ENCODE measurements at regions of chr22 and their contacts with region 1.

Region 1: GRCh38 chr22:22422629-22423112 is 85.9 kb downstream of the ZNF280B start:
- DNase-seq: peak; percentile 85
- ATAC-seq: peak; percentile 100
- H3K4me3 ChIP-seq: no peak overlapping the region
- H3K27ac ChIP-seq: no peak overlapping the region
- H3K4me1 ChIP-seq: no peaks in the 10 kb centered on the region
- H3K27me3 ChIP-seq: no peaks in the 10 kb centered on the region
- CTCF ChIP-seq: peak; percentile 55 to 72 (median 62)
- EP300 ChIP-seq: 0 out of 4 replicates have a peak, but pooled peaks have one; percentile 27 to 30
- POLR2A ChIP-seq: no peak
- RAD21 ChIP-seq: peak; percentile 48

Region 2: DNA sequence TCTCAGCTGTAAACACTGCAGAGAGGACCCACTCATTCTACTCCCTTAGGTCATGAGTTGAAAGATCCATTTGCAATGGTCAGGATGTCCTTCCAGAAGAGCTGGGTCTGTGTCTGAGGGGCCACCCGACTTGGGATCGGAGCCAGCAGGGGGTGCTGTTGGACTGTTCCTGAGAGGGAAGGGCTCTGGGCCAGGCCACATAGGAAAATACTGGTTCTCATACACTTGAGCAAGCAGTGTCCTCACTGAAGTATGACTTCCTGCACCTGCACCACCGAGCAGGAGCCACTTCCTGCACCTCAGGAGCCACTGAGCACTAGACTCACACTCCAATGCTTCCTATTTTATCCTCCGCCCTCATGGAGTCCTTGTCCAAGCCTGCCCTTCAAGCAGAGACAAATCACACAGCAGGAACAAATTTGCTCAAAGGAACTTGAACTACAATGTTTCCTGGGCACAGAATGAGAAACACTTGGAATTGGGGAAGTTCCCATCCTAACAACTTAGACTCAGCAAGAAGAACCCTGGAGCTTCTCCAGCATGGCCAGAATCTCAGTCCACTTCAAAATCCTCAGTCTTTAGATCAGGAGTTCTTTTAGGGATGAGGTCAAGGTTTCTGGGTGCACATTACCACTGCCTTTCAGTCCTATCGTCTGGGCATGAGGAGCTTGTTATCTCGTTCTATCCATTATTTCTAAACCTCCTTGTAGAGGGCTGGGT is 214.7 kb before region 1 on chr22:
- CTCF ChIA-PET with region 1: no interaction called
- POLR2A ChIA-PET with region 1: no interaction called
- RAD21 ChIA-PET with region 1: no interaction called
- SMC1A ChIA-PET with region 1: no interaction called
- in situ Hi-C with region 1: no loop called
- intact Hi-C with region 1: loop called (anchors 10 kb)
- DNase-seq: peak; percentile 62
- ATAC-seq: peak; percentile 94
- H3K4me3 ChIP-seq: no peak overlapping the region
- H3K27ac ChIP-seq: peak overlapping the region; percentile 45
- H3K4me1 ChIP-seq: peaks cover 3% of the 10 kb centered on the region
- H3K27me3 ChIP-seq: no peaks in the 10 kb centered on the region
- CTCF ChIP-seq: peak; percentile 66 to 78 (median 69); a peak in 5 of 6 replicates
- EP300 ChIP-seq: no peak
- POLR2A ChIP-seq: 0 out of 2 replicates have a peak, but pooled peaks have one; percentile 35
- RAD21 ChIP-seq: peak; percentile 81

Region 3: GRCh38 chr22:22403771-22404170 is 18.9 kb before region 1 on chr22:
- CTCF ChIA-PET with region 1: interaction called, 33 read pairs
- POLR2A ChIA-PET with region 1: no interaction called
- RAD21 ChIA-PET with region 1: interaction called, 18 read pairs
- SMC1A ChIA-PET with region 1: interaction called, 4 read pairs
- in situ Hi-C with region 1: no loop called
- intact Hi-C with region 1: no loop called
- DNase-seq: no peak
- ATAC-seq: peak; percentile 43; the same call in 1 of the 3 replicates
- H3K4me3 ChIP-seq: no peak overlapping the region
- H3K27ac ChIP-seq: no peak overlapping the region
- H3K4me1 ChIP-seq: no peaks in the 10 kb centered on the region; the same call in 1 of the 2 replicates
- H3K27me3 ChIP-seq: no peaks in the 10 kb centered on the region
- CTCF ChIP-seq: no peak
- EP300 ChIP-seq: no peak
- POLR2A ChIP-seq: no peak
- RAD21 ChIP-seq: no peak

Region 4: GRCh38 chr22:22450343-22450839 is 27.7 kb after region 1 on chr22:
- CTCF ChIA-PET with region 1: interaction called, 7 read pairs
- POLR2A ChIA-PET with region 1: interaction called, 4 read pairs
- RAD21 ChIA-PET with region 1: interaction called, 18 read pairs
- SMC1A ChIA-PET with region 1: interaction called, 7 read pairs
- in situ Hi-C with region 1: no loop called
- intact Hi-C with region 1: no loop called
- DNase-seq: peak; percentile 55
- ATAC-seq: peak; percentile 100
- H3K4me3 ChIP-seq: no peak overlapping the region
- H3K27ac ChIP-seq: no peak overlapping the region
- H3K4me1 ChIP-seq: peaks cover 9% of the 10 kb centered on the region
- H3K27me3 ChIP-seq: no peaks in the 10 kb centered on the region
- CTCF ChIP-seq: peak in 2 of 3 experiments; percentile 10 to 23; a peak in 2 of 6 replicates
- EP300 ChIP-seq: peak in 1 of 2 experiments; percentile 29; a peak in 2 of 4 replicates
- POLR2A ChIP-seq: no peak
- RAD21 ChIP-seq: no peak

Region 5: GRCh38 chr22:22558972-22559603 is 136.4 kb after region 1 on chr22 and contains the start of gene PRAME:
- CTCF ChIA-PET with region 1: interaction called, 4 read pairs
- POLR2A ChIA-PET with region 1: no interaction called
- RAD21 ChIA-PET with region 1: interaction called, 4 read pairs
- SMC1A ChIA-PET with region 1: no interaction called
- in situ Hi-C with region 1: no loop called
- intact Hi-C with region 1: loop called (anchors 10 kb)
- DNase-seq: peak; percentile 11
- ATAC-seq: peak; percentile 96
- H3K4me3 ChIP-seq: no peak within 1 kb of the TSS
- H3K27ac ChIP-seq: no peak within 1 kb of the TSS
- H3K4me1 ChIP-seq: no peaks in the 10 kb centered on the region
- H3K27me3 ChIP-seq: no peaks in the 10 kb centered on the region
- CTCF ChIP-seq: peak; percentile 68 to 81 (median 79)
- EP300 ChIP-seq: no peak
- POLR2A ChIP-seq: peak; percentile 20; the same call in 1 of the 2 replicates
- RAD21 ChIP-seq: no peak
- polyA plus RNA-seq, gene PRAME: 0.40 to 0.68 TPM

Measured in GM12878 (cell line).